A673 (cell line): ENCODE measurements at regions of chr10 and their contacts with region 1.

Region 1: DNA sequence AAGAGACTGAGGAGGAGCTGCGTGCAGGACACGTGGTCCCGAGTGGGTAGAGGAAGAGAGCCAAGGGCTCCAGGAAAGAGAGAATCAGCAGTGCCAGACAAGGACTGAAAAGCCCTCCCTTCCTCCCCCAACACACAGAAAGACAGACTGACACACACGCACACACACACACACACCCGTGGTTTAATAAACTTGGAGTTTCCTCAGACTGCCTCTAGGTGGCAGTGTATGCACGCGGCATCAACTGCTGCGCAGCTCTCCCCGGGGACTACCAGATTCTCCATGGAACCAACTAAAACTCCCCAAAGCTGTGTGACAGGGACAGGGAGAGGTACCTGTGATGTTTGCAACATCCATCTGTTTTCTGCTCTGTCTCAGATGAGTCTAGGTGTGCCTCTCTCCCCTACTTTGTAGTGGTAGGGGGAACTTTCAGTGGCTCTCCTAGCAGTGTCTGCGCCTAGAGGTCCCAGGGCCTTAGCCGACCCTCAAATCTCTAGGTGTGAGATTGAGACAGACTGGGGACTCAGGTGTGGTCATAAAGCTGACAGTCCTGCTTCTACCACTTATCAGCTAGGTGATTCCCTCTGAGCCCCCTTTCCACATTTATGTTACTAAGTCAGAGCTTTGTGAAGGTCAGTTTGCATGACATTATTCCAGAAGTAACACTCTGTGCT is 9.3 kb upstream of the TSPAN14 start:
- DNase-seq: peak; percentile 83
- H3K4me3 ChIP-seq: no peak overlapping the region
- H3K27ac ChIP-seq: no peak overlapping the region
- H3K4me1 ChIP-seq: peaks cover 3% of the 10 kb centered on the region
- H3K27me3 ChIP-seq: no peaks in the 10 kb centered on the region
- CTCF ChIP-seq: peak; percentile 89

Region 2: GRCh38 chr10:80205478-80206276 is 239.1 kb before region 1 on chr10 and contains the start of gene ANXA11:
- CTCF ChIA-PET with region 1: no interaction called
- POLR2A ChIA-PET with region 1: no interaction called
- intact Hi-C with region 1: no loop called
- DNase-seq: peak; percentile 92
- H3K4me3 ChIP-seq: peak within 1 kb of the TSS; percentile 93
- H3K27ac ChIP-seq: peak within 1 kb of the TSS; percentile 93
- H3K4me1 ChIP-seq: peaks cover 20% of the 10 kb centered on the region
- H3K27me3 ChIP-seq: no peaks in the 10 kb centered on the region
- CTCF ChIP-seq: no peak
- total RNA-seq, gene ANXA11: 118 and 119 TPM in 2 replicates

Region 3: GRCh38 chr10:80371460-80371859 is 73.3 kb before region 1 on chr10:
- CTCF ChIA-PET with region 1: no interaction called
- POLR2A ChIA-PET with region 1: no interaction called
- intact Hi-C with region 1: no loop called
- DNase-seq: no peak
- H3K4me3 ChIP-seq: no peak overlapping the region
- H3K27ac ChIP-seq: no peak overlapping the region
- H3K4me1 ChIP-seq: no peaks in the 10 kb centered on the region
- H3K27me3 ChIP-seq: no peaks in the 10 kb centered on the region
- CTCF ChIP-seq: no peak

Region 4: GRCh38 chr10:80382989-80383388 is 61.8 kb before region 1 on chr10:
- CTCF ChIA-PET with region 1: interaction called, 3 read pairs
- POLR2A ChIA-PET with region 1: no interaction called
- intact Hi-C with region 1: loop called (anchors 2 kb)
- DNase-seq: peak; percentile 62
- H3K4me3 ChIP-seq: no peak overlapping the region
- H3K27ac ChIP-seq: no peak overlapping the region
- H3K4me1 ChIP-seq: no peaks in the 10 kb centered on the region
- H3K27me3 ChIP-seq: no peaks in the 10 kb centered on the region
- CTCF ChIP-seq: peak; percentile 71

Region 5: DNA sequence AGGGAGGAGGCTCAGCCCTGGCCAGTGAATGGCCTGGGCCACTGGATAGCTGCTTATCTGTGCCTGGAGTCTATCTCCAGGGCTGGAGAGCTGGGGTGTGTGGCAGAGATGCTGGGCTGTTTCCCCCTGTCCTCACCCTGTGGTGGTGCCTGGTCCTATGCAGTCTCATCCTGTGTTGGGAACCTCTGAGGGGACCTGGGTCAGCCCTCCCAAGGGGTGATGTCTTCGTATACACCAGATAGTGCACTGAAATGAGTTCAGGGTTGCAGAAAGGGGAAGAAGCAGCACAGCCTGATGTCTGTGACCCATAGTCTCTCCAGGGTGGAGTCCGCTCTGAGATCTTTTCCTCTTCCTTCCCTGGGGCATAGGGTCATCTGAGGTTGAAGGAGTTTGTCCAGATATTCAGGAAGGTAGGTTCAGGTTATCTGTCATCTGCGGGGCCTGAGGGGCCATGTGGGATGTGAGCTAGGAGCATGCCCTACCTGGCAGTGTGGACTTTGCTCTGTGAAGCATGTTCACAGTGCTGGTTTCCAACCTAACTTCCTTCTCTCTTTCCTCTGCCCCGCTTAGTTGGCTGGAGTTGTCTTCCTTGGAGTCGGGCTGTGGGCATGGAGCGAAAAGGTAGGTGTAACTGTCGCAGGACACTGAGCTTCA is 59.5 kb after region 1 on chr10:
- CTCF ChIA-PET with region 1: interaction called, 58 read pairs
- POLR2A ChIA-PET with region 1: no interaction called
- intact Hi-C with region 1: loop called (anchors 1 kb)
- DNase-seq: no peak
- H3K4me3 ChIP-seq: no peak overlapping the region
- H3K27ac ChIP-seq: no peak overlapping the region
- H3K4me1 ChIP-seq: no peaks in the 10 kb centered on the region
- H3K27me3 ChIP-seq: no peaks in the 10 kb centered on the region
- CTCF ChIP-seq: no peak

Region 6: DNA sequence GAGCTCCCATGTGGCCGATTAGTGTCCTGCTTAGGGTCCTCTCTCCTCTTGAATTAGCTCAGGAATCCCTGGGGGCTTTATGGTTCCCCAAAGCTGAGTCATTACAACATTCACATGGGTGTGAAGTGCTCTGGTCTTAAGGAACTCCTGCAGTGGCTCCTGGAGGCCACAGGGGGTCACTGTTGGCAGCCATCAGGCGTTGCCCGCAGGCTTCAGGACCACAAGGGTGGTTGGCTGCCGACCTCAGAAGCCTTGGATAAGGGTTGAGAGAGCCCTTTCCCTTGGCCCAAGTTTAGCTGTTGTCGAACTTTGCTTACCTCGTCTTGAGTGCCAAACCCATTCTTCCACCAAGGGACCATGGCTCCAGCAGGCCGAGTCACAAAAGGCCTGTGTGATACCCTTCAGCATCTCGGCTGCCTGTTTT is 154.7 kb after region 1 on chr10:
- CTCF ChIA-PET with region 1: interaction called, 6 read pairs
- POLR2A ChIA-PET with region 1: no interaction called
- intact Hi-C with region 1: loop called (anchors 5 kb)
- DNase-seq: peak; percentile 82
- H3K4me3 ChIP-seq: no peak overlapping the region
- H3K27ac ChIP-seq: no peak overlapping the region
- H3K4me1 ChIP-seq: no peaks in the 10 kb centered on the region
- H3K27me3 ChIP-seq: no peaks in the 10 kb centered on the region
- CTCF ChIP-seq: peak; percentile 89

Region 7: GRCh38 chr10:80662577-80663261 is 217.9 kb after region 1 on chr10:
- CTCF ChIA-PET with region 1: interaction called, 7 read pairs
- POLR2A ChIA-PET with region 1: no interaction called
- intact Hi-C with region 1: loop called (anchors 5 kb)
- DNase-seq: peak; percentile 88
- H3K4me3 ChIP-seq: peak overlapping the region; percentile 21
- H3K27ac ChIP-seq: no peak overlapping the region
- H3K4me1 ChIP-seq: peaks cover 5% of the 10 kb centered on the region
- H3K27me3 ChIP-seq: no peaks in the 10 kb centered on the region
- CTCF ChIP-seq: peak; percentile 94

Region 8: DNA sequence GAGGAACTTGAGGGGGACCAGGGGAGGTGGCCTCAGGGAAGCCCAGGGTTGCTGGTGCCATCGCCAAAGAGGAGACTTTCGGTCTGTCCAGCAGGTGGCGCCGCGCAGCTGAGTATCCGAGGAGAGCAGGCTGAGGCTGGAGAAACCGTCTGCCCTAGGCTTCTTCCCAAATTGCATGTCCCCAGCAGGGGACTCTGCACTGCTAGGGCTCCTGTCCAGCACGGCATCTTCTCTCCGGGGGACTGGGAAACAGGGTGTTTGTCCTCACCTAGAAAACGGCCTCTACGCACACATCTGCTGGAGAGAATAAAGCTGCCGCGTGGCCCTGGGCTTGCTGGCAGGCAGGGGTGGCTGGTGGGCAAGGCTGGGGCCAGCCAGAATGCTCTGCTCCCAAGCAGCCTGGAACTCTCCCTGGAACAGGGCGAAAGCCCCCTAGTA is 254.8 kb after region 1 on chr10:
- CTCF ChIA-PET with region 1: no interaction called
- POLR2A ChIA-PET with region 1: no interaction called
- intact Hi-C with region 1: loop called (anchors 10 kb)
- DNase-seq: peak; percentile 82
- H3K4me3 ChIP-seq: no peak overlapping the region
- H3K27ac ChIP-seq: no peak overlapping the region
- H3K4me1 ChIP-seq: no peaks in the 10 kb centered on the region
- H3K27me3 ChIP-seq: no peaks in the 10 kb centered on the region
- CTCF ChIP-seq: peak; percentile 90

Region 9: DNA sequence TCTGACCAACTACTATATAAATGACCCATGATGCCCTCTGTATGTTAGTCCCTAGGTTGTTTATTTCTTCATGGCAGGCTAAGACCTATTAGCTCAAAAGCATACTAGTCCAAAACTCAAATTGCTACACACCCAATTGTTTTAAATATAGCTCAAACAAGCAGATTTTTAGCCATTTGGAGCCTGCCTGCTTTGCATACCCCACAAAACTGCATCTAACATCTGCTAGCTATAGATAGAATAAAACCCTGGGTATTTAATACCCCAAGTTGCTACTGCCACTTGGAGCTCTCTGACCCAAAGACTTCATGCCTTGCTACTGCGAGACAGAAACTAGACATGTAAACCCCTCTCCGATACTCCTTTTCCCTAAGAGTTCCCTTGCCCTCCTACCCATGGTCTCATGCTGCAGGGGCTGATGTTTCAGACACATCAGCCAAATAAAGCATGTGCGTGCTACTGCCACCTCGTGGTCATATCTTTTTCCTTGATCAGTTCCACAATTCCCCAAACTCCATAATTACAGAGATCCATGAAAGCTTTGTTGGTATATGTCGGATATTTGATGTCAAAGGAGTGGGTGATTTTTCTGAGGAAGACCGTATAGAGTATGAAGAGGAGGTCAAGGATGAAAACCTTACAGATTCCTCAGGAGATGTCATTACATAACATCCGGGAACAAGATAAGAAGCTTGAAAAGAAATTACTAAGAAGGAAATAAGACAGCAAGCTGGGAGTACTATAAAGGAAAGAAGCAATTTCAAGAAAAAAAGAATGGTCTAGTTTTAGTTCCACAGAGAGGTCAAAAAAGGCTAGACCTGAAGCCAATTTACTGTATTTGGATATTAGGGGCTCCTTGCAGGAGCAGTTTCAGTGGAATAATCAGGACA is 479.5 kb after region 1 on chr10:
- CTCF ChIA-PET with region 1: interaction called, 4 read pairs
- POLR2A ChIA-PET with region 1: no interaction called
- intact Hi-C with region 1: loop called (anchors 1 kb)
- DNase-seq: peak; percentile 62
- H3K4me3 ChIP-seq: no peak overlapping the region
- H3K27ac ChIP-seq: no peak overlapping the region
- H3K4me1 ChIP-seq: no peaks in the 10 kb centered on the region
- H3K27me3 ChIP-seq: no peaks in the 10 kb centered on the region
- CTCF ChIP-seq: peak; percentile 77